A673 (cell line): ENCODE measurements at regions of chr21 and their contacts with region 1.

Region 1: DNA sequence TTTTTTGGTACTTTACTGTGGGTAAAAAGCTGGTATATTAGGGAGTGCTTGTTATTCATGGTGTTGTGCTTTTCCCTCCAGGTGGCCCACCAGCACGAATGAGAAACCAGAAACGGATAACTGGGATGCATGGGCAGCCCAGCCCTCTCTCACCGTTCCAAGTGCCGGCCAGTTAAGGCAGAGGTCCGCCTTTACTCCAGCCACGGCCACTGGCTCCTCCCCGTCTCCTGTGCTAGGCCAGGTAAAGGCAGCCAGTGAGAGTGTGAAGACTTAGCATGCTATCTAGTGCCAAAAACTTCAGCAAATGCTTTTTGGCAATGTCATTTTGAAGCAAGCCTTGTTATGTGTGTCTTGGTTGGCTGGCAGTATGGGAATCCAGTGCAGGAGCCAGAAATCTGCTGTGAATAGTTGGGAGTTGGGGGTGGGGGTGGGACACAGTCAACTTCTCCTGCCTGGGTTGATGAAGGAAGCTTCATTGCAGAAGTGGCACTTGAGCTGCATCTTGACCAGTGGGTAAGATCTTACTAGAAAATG is 101.7 kb downstream of the ATP5PO start:
- DNase-seq: no peak
- H3K4me3 ChIP-seq: no peak overlapping the region
- H3K27ac ChIP-seq: no peak overlapping the region
- H3K4me1 ChIP-seq: peaks cover 11% of the 10 kb centered on the region
- H3K27me3 ChIP-seq: no peaks in the 10 kb centered on the region
- CTCF ChIP-seq: no peak

Region 2: GRCh38 chr21:32494934-32495703 is 1318.8 kb before region 1 on chr21:
- CTCF ChIA-PET with region 1: no interaction called
- POLR2A ChIA-PET with region 1: interaction called, 15 read pairs
- intact Hi-C with region 1: no loop called
- DNase-seq: no peak
- H3K4me3 ChIP-seq: no peak overlapping the region
- H3K27ac ChIP-seq: no peak overlapping the region
- H3K4me1 ChIP-seq: peaks cover 5% of the 10 kb centered on the region
- H3K27me3 ChIP-seq: no peaks in the 10 kb centered on the region
- CTCF ChIP-seq: no peak